Activated CD8-positive, alpha-beta T cell treated with anti-CD3 and anti-CD28 coated beads, Interleukin-2, amount 10 ng/mL, durations not matched to agents 7 days and 5 days (primary cell): ENCODE measurements at regions of chr22 and their contacts with region 1.

Region 1: DNA sequence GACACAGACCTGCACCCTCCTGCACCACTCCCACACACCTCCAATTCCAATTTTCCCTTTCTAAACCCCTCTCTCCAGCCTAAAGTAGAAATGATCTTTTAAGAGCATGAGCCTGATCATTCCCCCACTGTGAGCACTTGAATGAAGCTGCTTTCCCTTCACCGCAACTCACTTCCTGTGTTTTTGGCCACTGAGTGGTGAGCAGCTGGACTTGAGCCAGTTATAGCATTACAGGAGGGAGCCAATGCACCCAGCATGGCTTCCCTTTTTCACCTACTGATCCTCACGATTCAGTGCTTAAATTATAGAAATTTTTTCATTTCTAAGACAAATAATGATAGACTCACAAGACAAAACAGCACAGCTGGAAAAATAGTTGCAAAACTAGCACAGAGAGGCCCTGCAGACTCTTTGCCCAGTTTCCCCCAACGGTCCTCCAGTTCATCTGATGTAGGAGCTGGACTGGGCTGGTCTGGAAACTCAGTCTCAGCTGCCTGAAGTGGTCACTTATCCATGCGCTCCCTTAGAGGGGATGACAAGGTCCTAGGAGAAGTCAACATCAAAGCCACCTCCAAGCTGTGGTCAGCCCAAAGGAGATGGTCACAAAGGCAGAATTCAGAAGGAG is 9.7 kb upstream of the APOL4 start:
- DNase-seq: peak; percentile 32
- ATAC-seq: no peak
- H3K4me3 Mint-ChIP-seq: peak overlapping the region; percentile 2
- H3K27ac Mint-ChIP-seq: no peak overlapping the region
- H3K4me1 Mint-ChIP-seq: peaks cover 26% of the 10 kb centered on the region
- H3K27me3 Mint-ChIP-seq: peaks cover 45% of the 10 kb centered on the region

Region 2: GRCh38 chr22:36144886-36145541 is 66.3 kb before region 1 on chr22:
- CTCF ChIA-PET with region 1: no interaction called
- POLR2A ChIA-PET with region 1: no interaction called
- DNase-seq: peak; percentile 57
- ATAC-seq: peak; percentile 71
- H3K4me3 Mint-ChIP-seq: no peak overlapping the region
- H3K27ac Mint-ChIP-seq: no peak overlapping the region
- H3K4me1 Mint-ChIP-seq: peaks cover 9% of the 10 kb centered on the region
- H3K27me3 Mint-ChIP-seq: no peaks in the 10 kb centered on the region

Region 3: DNA sequence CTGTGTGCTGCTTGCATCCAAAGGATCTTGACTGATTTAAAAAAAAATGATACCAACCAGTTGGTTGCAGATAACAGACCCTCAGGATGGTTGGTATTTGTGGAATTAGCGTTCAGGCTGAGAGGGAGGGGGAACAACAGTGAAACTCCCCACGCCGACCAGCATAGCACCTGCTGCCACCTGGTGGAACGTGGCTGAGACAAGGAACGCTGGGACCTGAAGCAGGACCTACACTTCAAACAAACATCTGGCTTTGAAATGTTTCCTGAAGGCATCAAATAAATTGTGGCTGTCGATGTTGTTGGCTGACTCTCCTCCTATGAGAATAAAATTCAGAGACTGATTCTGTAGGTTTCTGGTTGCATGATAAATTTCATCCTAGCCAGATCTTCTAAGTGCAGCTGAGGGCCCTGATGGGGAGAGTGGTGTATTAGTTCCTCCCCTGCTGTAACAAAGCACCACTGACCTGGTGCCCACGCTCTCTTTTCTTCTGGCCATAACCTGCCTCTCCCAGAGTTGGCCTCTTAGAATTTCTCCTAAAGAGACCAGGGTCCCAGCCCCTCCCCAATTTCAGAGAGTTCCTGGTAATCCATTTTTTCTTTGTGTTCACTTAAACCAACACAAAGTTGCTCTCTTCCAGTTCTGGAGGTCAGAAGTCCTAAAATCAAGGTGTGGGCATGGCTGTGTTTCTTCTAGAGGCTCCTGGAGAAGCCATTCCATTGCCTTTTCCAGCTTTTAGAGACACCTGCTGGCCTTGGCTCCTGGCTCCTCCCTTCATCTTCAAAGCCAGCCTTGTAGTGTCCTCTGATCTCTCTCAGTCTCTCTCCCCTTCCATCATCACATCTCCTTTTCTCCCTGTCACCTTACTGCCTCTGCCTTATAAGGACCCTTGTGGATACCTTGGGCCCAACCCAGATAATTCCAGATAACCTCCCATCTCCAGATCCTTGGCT is 10.7 kb after region 1 on chr22:
- CTCF ChIA-PET with region 1: interaction called, 12 read pairs
- POLR2A ChIA-PET with region 1: no interaction called
- DNase-seq: peak; percentile 73
- ATAC-seq: peak; percentile 94
- H3K4me3 Mint-ChIP-seq: no peak overlapping the region
- H3K27ac Mint-ChIP-seq: no peak overlapping the region
- H3K4me1 Mint-ChIP-seq: peaks cover 12% of the 10 kb centered on the region
- H3K27me3 Mint-ChIP-seq: peaks cover 29% of the 10 kb centered on the region

Region 4: DNA sequence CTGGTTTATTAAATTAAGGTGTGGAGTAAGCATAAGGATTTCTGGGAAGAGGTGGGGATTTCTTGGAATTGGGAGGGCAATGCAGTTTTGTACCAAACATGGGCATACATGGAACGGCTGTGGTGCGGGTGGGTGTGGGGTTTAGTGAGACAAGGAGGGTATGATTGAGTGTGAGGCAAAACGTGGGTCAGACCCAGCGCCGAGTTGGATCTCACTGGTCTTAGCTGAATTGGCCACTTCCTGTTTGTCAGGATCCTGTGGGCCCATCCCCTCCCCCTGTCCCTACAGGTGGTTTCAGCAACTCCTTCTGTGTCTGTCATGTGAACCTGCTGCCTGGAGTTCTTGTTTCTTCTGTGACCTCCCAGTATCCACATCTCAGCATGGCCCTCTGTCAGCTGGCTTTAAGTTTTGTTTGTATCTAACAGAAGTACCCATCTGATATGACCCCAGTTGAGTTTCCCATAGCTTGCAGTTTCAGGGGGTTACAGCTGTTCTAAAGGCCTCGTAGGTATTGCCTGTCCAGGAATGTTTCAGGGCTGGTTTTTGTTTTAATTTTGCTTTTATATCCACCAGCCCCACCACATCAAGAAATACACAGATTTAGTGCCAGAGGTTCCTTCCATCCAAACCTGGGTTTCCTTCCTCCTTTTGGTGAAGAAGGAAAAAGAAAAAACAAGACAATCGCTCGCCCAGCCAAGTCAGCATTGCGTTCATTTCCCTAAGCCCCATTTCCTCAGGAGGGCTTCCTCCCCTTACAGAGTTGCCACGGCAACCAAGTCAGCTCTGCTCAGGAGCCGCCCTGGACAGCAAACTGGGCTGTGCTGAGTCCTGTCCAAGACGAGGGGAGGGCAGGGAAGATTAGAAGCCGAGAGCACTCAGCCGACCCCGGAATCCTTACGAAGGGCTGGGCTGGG is 47.6 kb after region 1 on chr22:
- CTCF ChIA-PET with region 1: no interaction called
- POLR2A ChIA-PET with region 1: no interaction called
- DNase-seq: peak; percentile 66
- ATAC-seq: peak; percentile 41
- H3K4me3 Mint-ChIP-seq: peak overlapping the region; percentile 37
- H3K27ac Mint-ChIP-seq: peak overlapping the region; percentile 85
- H3K4me1 Mint-ChIP-seq: peaks cover 59% of the 10 kb centered on the region
- H3K27me3 Mint-ChIP-seq: no peaks in the 10 kb centered on the region